Naive thymus-derived CD8-positive, alpha-beta T cell (primary cell): ENCODE measurements at regions of chr18 and their contacts with region 1.

Region 1: GRCh38 chr18:57621246-57621604 is 411 bp downstream of the NARS1 start:
- DNase-seq: no peak
- ATAC-seq: peak; percentile 12 to 21
- H3K4me3 Mint-ChIP-seq: peak overlapping the region; percentile 93 to 99 (median 97)
- H3K27ac Mint-ChIP-seq: peak overlapping the region; percentile 92 to 99 (median 98)
- H3K4me1 Mint-ChIP-seq: peaks cover 0 to 54% (median 39%) of the 10 kb centered on the region in 4 donors
- H3K27me3 Mint-ChIP-seq: peaks cover 0 to 3% (median 0%) of the 10 kb centered on the region in 5 donors

Region 2: DNA sequence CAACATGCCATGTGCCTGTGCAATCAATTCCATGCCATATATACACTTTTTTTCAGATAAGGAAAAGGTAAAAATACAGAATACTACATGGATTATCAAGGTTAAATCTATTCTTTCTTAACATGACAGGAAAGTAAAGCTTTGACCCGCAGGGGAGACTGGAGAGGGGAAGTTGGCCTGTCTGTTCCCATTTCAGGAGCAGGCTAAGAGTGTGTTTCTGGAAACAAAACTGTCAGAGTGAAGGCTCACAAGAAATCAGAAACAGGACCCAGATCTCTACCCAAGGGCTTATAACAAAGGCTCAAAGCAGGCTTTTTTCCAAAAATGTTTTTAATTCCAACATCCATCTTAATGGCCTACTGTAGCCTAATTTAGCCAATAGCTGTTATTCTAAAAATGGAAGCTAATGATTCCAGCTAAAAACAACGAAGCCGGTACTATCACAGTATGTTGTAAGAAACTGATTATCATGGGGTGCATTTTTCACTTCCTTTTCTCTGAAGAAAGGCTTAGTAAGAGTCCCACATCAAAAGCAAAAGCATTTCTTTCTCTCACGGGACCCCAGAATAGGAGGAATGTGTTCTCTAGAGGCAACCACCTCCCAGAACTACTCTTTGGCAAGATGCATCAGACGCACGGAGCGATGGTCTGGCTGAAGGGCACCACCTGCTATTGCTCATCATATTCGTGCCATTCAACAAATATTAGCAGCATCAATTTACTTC is 76.1 kb before region 1 on chr18:
- POLR2A ChIA-PET with region 1: no interaction called
- DNase-seq: no peak
- ATAC-seq: no peak
- H3K4me3 Mint-ChIP-seq: peak overlapping the region in 1 of 10 donors; percentile 3
- H3K27ac Mint-ChIP-seq: peak overlapping the region in 1 of 10 donors; percentile 77
- H3K4me1 Mint-ChIP-seq: peaks cover 6 to 14% (median 13%) of the 10 kb centered on the region in 4 donors
- H3K27me3 Mint-ChIP-seq: no peaks in the 10 kb centered on the region

Region 3: GRCh38 chr18:57587098-57587661 is 34.0 kb before region 1 on chr18:
- POLR2A ChIA-PET with region 1: interaction called, 15 read pairs
- DNase-seq: no peak
- ATAC-seq: no peak
- H3K4me3 Mint-ChIP-seq: peak overlapping the region; percentile 84 to 93 (median 90)
- H3K27ac Mint-ChIP-seq: peak overlapping the region; percentile 66 to 92 (median 88)
- H3K4me1 Mint-ChIP-seq: peaks cover 15 to 44% (median 31%) of the 10 kb centered on the region in 4 donors
- H3K27me3 Mint-ChIP-seq: no peaks in the 10 kb centered on the region